GM10248 (cell line): ENCODE measurements at regions of chr17 and their contacts with region 1.

Region 1: DNA sequence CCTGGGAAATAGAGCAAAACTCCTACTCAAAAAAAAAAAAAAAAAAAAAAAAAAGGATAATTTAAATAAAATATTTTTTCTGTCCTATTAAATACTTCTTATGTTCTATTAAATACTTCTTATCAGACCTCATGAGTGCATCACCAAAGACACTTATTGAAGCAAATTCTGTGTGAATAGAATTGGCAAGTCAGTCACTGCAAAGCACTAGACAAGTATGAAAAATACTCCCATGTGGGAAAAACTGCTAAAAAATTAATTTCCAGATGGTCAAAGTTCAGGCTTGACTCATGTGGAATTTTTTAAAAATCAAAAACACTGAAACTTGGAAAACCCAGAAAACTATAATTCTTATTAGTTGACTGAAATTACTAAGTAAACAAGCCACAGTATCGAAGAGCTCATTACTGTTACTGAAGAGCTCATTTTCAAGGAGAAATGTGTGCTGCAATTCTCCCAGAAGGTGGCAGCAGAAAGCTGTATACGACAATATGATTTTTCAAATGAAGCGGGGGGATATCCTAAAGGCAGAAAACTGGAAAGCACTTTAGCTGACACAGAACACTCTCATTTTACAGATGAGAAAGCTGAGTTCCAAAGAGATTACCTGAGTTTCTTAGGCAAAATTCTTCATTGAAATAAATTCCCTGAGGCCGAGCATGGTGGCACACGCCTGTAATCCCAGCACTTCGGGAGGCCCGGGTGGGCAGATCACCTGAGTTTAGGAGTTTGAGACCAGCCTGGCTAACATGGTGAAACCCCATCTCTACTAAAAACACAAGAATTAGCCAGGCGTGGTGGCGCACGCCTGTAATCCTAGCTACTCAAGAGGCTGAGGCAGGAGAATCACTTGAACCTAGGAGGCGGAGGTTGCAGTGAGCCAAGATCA is 15.9 kb upstream of the FBXO47 start:
- DNase-seq: peak; percentile 72
- CTCF ChIP-seq: peak; percentile 74

Region 2: GRCh38 chr17:38967290-38967738 is 15.8 kb before region 1 on chr17 and contains the start of gene FBXO47:
- CTCF ChIA-PET with region 1: interaction called, 12 read pairs
- POLR2A ChIA-PET with region 1: no interaction called
- DNase-seq: peak; percentile 57
- CTCF ChIP-seq: no peak

Region 3: DNA sequence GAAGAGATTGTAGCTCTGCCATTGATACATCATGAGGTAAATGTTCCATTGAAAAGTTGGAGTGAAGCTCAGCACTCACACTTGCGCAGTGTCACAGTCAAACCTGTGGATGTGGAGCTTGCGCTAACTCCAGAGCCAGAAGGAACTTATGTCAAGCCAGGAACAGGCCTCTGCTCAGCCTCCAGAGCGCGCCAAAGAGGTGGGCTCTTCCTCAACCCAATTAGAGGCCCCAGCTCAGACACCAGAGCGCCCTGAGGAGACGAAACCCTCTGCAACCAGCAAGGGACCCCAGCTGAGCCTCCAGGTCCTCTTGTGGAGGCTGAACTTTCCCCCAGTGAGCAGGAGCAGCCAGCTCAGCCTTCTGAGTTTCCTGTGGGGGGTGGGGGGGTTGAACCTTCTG is 45.6 kb after region 1 on chr17:
- CTCF ChIA-PET with region 1: interaction called, 10 read pairs
- POLR2A ChIA-PET with region 1: no interaction called
- DNase-seq: no peak
- CTCF ChIP-seq: no peak

Region 4: GRCh38 chr17:39144416-39144840 is 161.3 kb after region 1 on chr17:
- CTCF ChIA-PET with region 1: interaction called, 11 read pairs
- POLR2A ChIA-PET with region 1: no interaction called
- DNase-seq: no peak
- CTCF ChIP-seq: no peak

Region 5: GRCh38 chr17:39164675-39165143 is 181.6 kb after region 1 on chr17:
- CTCF ChIA-PET with region 1: interaction called, 28 read pairs
- POLR2A ChIA-PET with region 1: no interaction called
- DNase-seq: peak; percentile 97
- CTCF ChIP-seq: peak; percentile 75

Region 6: GRCh38 chr17:39244600-39245570 is 261.8 kb after region 1 on chr17:
- CTCF ChIA-PET with region 1: interaction called, 25 read pairs
- POLR2A ChIA-PET with region 1: interaction called, 4 read pairs
- DNase-seq: peak; percentile 84
- CTCF ChIP-seq: peak; percentile 95